Sigmoid colon (tissue), 7 donors: ENCODE measurements at regions of chr22 and their contacts with region 1.

Region 1: DNA sequence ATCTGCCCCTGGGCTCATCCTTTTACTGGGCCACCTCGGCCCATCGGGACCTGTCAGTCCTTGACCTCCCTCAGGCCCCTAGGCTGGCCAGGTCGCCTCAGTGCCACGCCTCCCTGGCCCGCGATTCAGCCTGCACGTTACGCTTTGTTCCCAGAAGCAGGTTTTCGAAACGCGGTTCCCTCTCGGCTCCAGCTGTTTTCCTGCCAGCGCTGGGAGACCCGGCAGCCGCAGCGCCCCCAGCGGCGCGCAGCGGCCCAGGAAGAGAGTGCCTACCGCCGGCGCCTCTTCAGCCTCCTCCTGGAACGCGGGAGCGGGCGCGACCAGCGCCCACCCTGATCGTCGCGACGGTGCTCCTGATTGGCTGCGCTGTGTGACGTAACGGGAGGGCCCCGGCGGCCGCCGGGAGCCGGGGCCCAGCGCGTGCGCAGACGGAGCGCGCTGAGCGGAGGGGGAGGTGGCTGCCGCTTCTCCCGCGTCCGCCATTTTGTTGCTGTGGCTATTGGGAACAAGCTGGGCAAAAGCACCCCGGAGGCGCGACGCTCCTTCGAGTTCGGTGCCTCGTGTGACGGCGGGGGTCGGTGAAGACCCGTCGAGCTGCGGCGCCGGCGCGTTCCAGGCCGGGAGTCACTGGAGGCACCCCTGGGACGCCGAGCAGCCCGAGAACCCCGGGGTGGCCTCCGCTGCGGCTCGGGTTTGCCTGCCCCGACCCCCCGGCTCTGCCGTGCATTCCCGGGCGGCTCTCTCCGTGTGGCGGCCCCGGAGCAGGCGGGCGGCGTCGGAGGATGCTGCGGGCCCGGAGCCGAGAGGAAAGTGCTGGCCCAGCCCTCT is at the start of gene CRKL:
- DNase-seq: peak; percentile 99
- H3K4me3 ChIP-seq: peak within 1 kb of the TSS; percentile 92 to 100 (median 96)
- H3K27ac ChIP-seq: peak within 1 kb of the TSS; percentile 95 to 100 (median 98)
- H3K4me1 ChIP-seq: peaks cover 0 to 39% (median 31%) of the 10 kb centered on the region in 4 donors
- H3K27me3 ChIP-seq: no peaks in the 10 kb centered on the region
- CTCF ChIP-seq: peak; percentile 81 to 92 (median 91)
- EP300 ChIP-seq: peak in 1 of 4 donors; percentile 7
- POLR2A ChIP-seq: peak; percentile 85 to 94
- total RNA-seq, gene CRKL: 35.6 to 37.1 (median 36.4) TPM

Region 2: GRCh38 chr22:20885557-20886323 is 31.5 kb before region 1 on chr22:
- intact Hi-C with region 1: loop called (anchors 5 kb)
- DNase-seq: peak; percentile 89
- H3K4me3 ChIP-seq: no peak overlapping the region
- H3K27ac ChIP-seq: peak overlapping the region; percentile 47 to 67 (median 57)
- H3K4me1 ChIP-seq: peaks cover 0 to 7% (median 4%) of the 10 kb centered on the region in 4 donors
- H3K27me3 ChIP-seq: no peaks in the 10 kb centered on the region
- CTCF ChIP-seq: peak; percentile 67 to 95 (median 84)
- EP300 ChIP-seq: no peak
- POLR2A ChIP-seq: no peak

Region 3: DNA sequence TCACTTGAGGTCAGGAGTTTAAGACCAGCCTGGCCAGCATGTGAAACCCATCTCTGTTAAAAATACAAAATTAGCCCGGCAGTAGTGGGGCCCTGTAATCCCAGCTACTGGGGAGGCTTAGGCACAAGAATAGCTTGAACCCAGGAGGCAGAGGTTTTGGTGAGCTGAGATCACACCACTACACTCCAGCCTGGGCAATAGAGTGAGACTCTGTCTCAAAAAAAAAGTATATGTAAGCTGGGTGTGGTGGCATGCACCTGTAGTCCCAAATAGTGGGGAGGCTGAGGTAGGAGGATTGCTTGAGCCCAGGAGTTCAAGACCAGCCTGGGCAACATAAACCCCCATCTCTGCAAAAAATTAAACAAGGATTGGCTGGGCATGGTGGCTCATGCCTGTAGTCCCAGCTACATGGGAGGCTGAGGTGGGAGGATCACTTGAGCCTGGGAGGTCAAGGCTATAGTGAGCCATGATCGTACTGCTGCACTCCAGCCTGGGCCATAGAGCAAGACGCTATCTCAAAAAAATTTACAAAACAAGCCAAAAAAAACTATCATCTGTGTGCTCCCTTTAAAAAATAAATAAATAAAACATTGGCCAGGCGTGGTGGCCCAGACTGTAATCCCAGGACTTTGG is 10.9 kb after region 1 on chr22:
- intact Hi-C with region 1: no loop called
- DNase-seq: no peak
- H3K4me3 ChIP-seq: no peak overlapping the region
- H3K27ac ChIP-seq: no peak overlapping the region
- H3K4me1 ChIP-seq: peaks cover 0 to 33% (median 18%) of the 10 kb centered on the region in 4 donors
- H3K27me3 ChIP-seq: no peaks in the 10 kb centered on the region
- CTCF ChIP-seq: no peak
- EP300 ChIP-seq: no peak
- POLR2A ChIP-seq: no peak

Region 4: DNA sequence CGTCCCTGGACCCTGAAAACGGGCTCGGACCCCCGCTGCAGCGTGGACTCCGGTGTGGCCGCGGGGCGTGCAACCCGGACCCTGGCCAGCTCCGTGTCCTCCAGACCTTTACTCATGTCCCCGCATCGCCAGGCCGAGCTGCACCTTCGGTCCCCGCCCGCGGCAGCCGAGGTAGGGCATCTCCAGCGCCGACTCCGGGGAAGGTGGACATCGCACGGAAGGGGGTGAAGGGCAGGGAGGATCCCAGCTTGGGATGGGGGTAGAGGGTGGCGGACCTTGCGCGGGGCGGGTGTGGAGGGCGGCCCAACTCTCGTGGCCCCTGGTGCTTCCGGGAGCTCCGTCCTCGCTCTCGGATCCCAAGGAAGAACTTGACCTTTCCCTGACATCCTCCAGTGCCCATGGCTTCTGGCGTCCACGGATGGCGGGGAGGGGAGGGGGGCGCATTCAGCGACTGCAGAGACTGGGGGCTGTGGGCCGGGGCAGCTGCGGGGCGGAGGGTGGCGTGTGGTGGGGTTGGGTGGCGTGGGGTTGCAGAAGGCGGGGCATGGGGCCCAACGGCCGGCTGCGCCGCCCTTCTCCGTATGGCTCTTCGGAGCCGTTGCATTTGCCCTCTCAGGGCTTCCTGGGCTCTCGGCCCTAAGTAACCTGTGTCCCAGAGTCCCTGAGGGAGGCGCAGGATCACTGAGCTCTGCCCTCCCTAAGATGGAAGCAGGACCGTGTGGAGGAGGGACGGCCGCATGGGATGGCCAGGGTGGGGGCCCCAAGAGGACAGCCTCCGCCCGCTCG is 40.3 kb after region 1 on chr22:
- intact Hi-C with region 1: loop called (anchors 5 kb)
- DNase-seq: no peak
- H3K4me3 ChIP-seq: peak overlapping the region; percentile 57 to 68 (median 62)
- H3K27ac ChIP-seq: peak overlapping the region; percentile 47 to 67 (median 61)
- H3K4me1 ChIP-seq: peaks cover 0 to 17% (median 11%) of the 10 kb centered on the region in 4 donors
- H3K27me3 ChIP-seq: no peaks in the 10 kb centered on the region
- CTCF ChIP-seq: no peak
- EP300 ChIP-seq: no peak
- POLR2A ChIP-seq: no peak

Region 5: DNA sequence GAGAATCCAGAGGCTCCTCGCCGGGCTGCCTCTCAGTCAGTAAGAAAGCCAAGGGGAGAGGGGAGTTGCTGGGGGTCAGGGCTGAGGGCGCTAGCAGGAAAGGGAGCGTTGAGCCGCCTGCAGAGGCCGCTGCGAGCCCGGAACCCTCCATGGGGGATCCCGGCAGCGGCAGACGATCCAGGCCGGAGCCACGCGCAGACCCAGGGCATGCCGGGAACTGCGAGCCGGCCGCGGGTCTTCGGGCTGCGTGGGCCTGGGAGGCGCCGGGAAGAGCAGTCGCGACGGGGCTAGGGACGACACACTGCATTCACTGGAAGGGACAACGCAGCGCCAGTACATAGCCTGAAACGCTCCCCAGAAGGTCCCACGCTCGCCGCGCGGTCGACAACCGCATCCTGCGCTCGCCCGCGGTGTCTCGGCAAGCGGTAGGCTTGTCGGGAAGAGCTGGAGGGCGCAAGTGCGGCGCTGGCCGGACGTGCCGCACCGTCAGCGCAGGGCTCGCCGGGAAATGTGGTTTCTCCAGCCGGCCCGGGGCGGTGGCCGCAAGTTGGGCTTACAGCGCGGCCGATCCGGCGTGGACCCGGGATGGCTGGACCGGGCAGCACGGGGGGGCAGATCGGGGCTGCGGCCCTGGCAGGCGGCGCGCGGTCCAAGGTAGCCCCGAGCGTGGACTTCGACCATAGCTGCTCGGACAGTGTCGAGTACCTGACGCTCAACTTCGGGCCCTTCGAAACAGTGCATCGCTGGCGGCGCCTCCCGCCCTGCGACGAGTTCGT is 64.8 kb after region 1 on chr22 and contains the start of gene LZTR1:
- intact Hi-C with region 1: loop called (anchors 5 kb)
- DNase-seq: peak; percentile 89
- H3K4me3 ChIP-seq: peak within 1 kb of the TSS; percentile 69 to 91 (median 90)
- H3K27ac ChIP-seq: peak within 1 kb of the TSS; percentile 87 to 93 (median 90)
- H3K4me1 ChIP-seq: peaks cover 0 to 46% (median 43%) of the 10 kb centered on the region in 4 donors
- H3K27me3 ChIP-seq: no peaks in the 10 kb centered on the region
- CTCF ChIP-seq: peak in 2 of 4 experiments; percentile 19 to 53
- EP300 ChIP-seq: no peak
- POLR2A ChIP-seq: peak; percentile 88 to 95
- total RNA-seq, gene LZTR1: 30.8 to 50.4 (median 35.8) TPM